ENCODE measurements at regions of chr12 and their contacts with region 1.

Region 1: GRCh38 chr12:8032242-8033152 is at the start of gene FOXJ2:
- DNase-seq: peak; percentile 50 to 56 (median 52)
- H3K4me3 ChIP-seq: peak within 1 kb of the TSS; percentile 81 to 97 (median 94)
- H3K4me3 Mint-ChIP-seq: peak within 1 kb of the TSS; percentile 88 to 94
- H3K27ac ChIP-seq: peak within 1 kb of the TSS; percentile 71 to 92
- H3K27ac Mint-ChIP-seq: peak within 1 kb of the TSS; percentile 82 to 92 (median 88)
- H3K4me1 ChIP-seq: peaks cover 53 to 59% of the 10 kb centered on the region in 2 donors
- H3K4me1 Mint-ChIP-seq: peaks cover 54% of the 10 kb centered on the region
- H3K27me3 ChIP-seq: no peaks in the 10 kb centered on the region
- H3K27me3 Mint-ChIP-seq: peaks cover 0 to 2% (median 0%) of the 10 kb centered on the region in 3 donors
- CTCF ChIP-seq: no peak
- polyA plus RNA-seq, gene FOXJ2: 4.9 to 15.0 (median 7.4) TPM

Region 2: DNA sequence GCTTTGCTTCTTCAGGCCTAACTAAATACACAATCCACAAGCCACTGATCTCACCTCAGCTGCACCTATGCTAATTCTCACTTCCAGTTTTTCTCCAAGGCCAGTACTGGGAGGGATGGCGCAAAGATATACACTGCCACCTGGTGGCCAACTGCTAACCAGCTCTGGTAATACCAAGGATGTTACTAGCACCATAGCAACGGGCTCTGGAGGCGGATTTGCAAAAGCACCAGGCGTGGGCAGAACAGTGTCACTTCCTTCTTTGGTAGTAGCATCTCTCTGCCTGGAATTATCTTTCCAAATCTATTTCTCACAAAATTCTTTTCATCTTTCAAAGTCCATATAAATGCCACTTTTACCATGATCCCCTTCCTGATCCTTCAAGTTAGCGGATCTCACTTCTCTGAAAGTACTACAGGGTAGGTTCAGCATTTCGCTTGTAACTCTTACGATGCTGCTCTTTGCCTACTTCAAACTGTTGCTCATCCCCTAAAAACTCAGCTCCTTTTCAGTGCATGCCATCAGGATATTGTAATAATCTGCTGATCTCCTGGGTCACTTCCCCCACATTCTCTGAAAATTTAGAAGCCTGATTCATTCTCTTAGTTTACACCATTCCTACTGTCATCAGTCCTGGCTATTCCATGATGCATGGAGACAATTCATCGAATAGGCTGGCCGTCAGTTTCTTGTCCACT is 37.1 kb before region 1 on chr12:
- intact Hi-C with region 1: no loop called
- DNase-seq: peak; percentile 86 to 94 (median 93)
- H3K4me3 ChIP-seq: no peak overlapping the region
- H3K4me3 Mint-ChIP-seq: no peak overlapping the region
- H3K27ac ChIP-seq: peak overlapping the region in 1 of 2 donors; percentile 59
- H3K27ac Mint-ChIP-seq: no peak overlapping the region
- H3K4me1 ChIP-seq: peaks cover 26 to 40% of the 10 kb centered on the region in 2 donors
- H3K4me1 Mint-ChIP-seq: peaks cover 15% of the 10 kb centered on the region
- H3K27me3 ChIP-seq: no peaks in the 10 kb centered on the region
- H3K27me3 Mint-ChIP-seq: peaks cover 0 to 5% (median 0%) of the 10 kb centered on the region in 3 donors
- CTCF ChIP-seq: peak; percentile 84

Region 3: DNA sequence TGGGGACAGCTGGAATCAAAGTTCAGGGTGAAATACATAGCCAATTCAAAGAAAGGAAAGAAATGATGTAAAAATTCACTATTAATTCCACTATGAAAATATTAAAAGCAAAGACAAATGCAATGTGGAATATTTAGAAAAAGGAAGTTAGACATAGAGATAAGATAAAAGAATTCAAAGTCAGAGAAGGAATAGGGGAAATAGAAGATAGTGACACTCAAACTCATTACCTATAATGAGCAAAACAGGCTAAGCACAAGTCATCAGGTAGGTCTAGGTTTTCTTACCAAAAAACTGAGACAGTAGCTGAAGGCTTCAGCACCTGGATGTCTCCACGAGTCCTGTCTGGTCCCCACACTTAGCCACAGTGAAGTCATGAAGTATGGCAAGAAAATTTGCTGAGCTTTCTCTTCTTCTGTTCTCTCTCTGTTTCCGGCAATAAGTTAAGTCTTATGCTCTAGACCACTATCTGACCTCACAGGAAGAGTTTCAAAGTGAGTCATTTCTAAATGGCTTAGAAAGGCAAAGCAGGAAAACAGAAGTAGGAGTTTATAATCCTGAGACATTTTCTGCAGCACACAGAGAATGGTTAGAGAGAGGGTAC is 33.6 kb after region 1 on chr12 and contains the start of gene C3AR1:
- intact Hi-C with region 1: no loop called
- DNase-seq: peak; percentile 69 to 88 (median 87)
- H3K4me3 ChIP-seq: peak within 1 kb of the TSS; percentile 65 to 94 (median 80)
- H3K4me3 Mint-ChIP-seq: peak within 1 kb of the TSS; percentile 79 to 85
- H3K27ac ChIP-seq: peak within 1 kb of the TSS; percentile 72 to 92
- H3K27ac Mint-ChIP-seq: peak within 1 kb of the TSS; percentile 88 to 96 (median 93)
- H3K4me1 ChIP-seq: peaks cover 75 to 96% of the 10 kb centered on the region in 2 donors
- H3K4me1 Mint-ChIP-seq: peaks cover 74% of the 10 kb centered on the region
- H3K27me3 ChIP-seq: no peaks in the 10 kb centered on the region
- H3K27me3 Mint-ChIP-seq: no peaks in the 10 kb centered on the region
- CTCF ChIP-seq: no peak
- polyA plus RNA-seq, gene C3AR1: 60.7 to 222 (median 67.3) TPM

Region 4: DNA sequence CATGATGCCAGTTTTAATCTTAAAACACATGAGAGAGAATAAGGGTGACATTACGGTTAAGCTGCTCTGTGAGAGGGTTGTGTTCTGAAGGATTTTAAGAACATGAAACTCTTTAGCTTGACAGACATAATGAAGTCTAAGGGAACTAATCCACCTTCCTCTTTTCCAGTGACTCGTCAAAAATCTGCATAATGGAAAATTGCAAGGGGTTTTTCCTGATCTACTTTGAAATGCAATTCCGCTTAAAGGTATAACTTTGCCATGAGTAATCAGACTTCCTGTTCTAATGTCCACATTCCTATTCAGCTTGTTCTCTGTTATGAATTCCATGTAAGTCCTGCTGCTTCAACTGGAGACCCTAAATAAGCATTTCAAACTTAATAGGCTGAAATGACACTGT is 124.3 kb after region 1 on chr12 and contains the start of gene ZNF705A:
- intact Hi-C with region 1: no loop called
- DNase-seq: peak; percentile 76 to 95 (median 95)
- H3K4me3 ChIP-seq: peak within 1 kb of the TSS in 1 of 3 experiments; percentile 51
- H3K4me3 Mint-ChIP-seq: peak within 1 kb of the TSS; percentile 35 to 83
- H3K27ac ChIP-seq: peak within 1 kb of the TSS; percentile 48 to 92
- H3K27ac Mint-ChIP-seq: peak within 1 kb of the TSS; percentile 97 to 100 (median 98)
- H3K4me1 ChIP-seq: peaks cover 37 to 48% of the 10 kb centered on the region in 2 donors
- H3K4me1 Mint-ChIP-seq: peaks cover 52% of the 10 kb centered on the region
- H3K27me3 ChIP-seq: no peaks in the 10 kb centered on the region
- H3K27me3 Mint-ChIP-seq: no peaks in the 10 kb centered on the region
- CTCF ChIP-seq: no peak
- polyA plus RNA-seq, gene ZNF705A: not detected

Region 5: DNA sequence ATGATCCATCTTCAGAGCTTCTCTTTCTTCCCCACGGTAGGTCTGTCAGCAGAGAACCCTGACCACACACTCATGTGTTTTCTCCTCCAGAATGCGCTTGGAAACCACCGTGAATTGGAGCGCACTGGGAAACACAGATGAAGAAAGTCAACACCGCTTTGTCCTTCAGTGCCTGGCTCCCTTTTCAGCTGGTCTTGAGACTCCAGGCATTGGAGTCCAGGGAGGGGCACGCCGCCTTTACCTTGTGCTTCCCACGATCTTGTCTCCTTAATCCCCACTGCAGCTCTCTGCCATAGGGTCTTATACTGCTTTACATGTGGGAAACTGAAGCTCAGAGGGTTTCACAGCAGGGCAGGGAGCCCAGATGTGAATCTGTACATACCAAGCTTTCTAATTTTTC is 193.9 kb after region 1 on chr12:
- intact Hi-C with region 1: loop called in 1 of 2 experiments (anchors 10 kb)
- DNase-seq: no peak
- H3K4me3 ChIP-seq: no peak overlapping the region
- H3K4me3 Mint-ChIP-seq: no peak overlapping the region
- H3K27ac ChIP-seq: no peak overlapping the region
- H3K27ac Mint-ChIP-seq: peak overlapping the region in 1 of 7 donors; percentile 69
- H3K4me1 ChIP-seq: peaks cover 5 to 14% of the 10 kb centered on the region in 2 donors
- H3K4me1 Mint-ChIP-seq: peaks cover 20% of the 10 kb centered on the region
- H3K27me3 ChIP-seq: no peaks in the 10 kb centered on the region
- H3K27me3 Mint-ChIP-seq: peaks cover 0 to 3% (median 2%) of the 10 kb centered on the region in 3 donors
- CTCF ChIP-seq: no peak